CD4-positive, alpha-beta memory T cell (primary cell): ENCODE measurements at regions of chr21 and their contacts with region 1.

Region 1: GRCh38 chr21:42513985-42514882 is 582 bp downstream of the SLC37A1 start:
- DNase-seq: peak; percentile 50 to 64 (median 59)
- H3K4me3 ChIP-seq: peak overlapping the region; percentile 57 to 79
- H3K4me3 Mint-ChIP-seq: peak overlapping the region; percentile 90 to 92 (median 90)
- H3K27ac ChIP-seq: peak overlapping the region; percentile 65
- H3K27ac Mint-ChIP-seq: peak overlapping the region; percentile 78 to 94 (median 90)
- H3K4me1 ChIP-seq: peaks cover 29% of the 10 kb centered on the region
- H3K4me1 Mint-ChIP-seq: peaks cover 18 to 50% (median 31%) of the 10 kb centered on the region in 4 donors
- H3K27me3 ChIP-seq: no peaks in the 10 kb centered on the region
- H3K27me3 Mint-ChIP-seq: no peaks in the 10 kb centered on the region

Region 2: DNA sequence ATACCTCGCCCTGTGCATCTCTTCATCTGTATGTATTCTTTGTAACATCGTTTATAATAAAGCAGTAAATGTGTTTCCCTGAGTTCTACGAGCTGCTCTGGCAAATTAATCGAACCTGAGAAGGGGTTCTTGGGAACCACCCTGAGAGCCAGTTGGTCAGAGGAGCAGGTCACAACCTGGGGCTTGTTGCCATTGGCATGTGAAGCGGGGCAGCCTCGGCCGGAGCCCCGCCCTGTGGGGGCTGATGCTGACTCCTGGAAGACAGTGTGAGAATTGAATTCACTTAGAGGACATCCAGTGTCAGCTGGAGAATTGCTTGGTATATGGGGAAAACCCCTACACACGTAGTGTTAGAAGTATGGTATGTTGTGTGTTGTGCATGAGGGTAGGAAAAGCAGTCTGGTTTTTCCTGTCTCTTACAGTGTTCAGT is 10.9 kb after region 1 on chr21:
- CTCF ChIA-PET with region 1: no interaction called
- POLR2A ChIA-PET with region 1: interaction called, 42 read pairs
- intact Hi-C with region 1: loop called (anchors 1 kb)
- DNase-seq: no peak
- H3K4me3 ChIP-seq: no peak overlapping the region
- H3K4me3 Mint-ChIP-seq: peak overlapping the region in 2 of 8 donors; percentile 38 to 43
- H3K27ac ChIP-seq: no peak overlapping the region
- H3K27ac Mint-ChIP-seq: peak overlapping the region in 6 of 7 donors; percentile 38 to 85 (median 68)
- H3K4me1 ChIP-seq: peaks cover 32% of the 10 kb centered on the region
- H3K4me1 Mint-ChIP-seq: peaks cover 18 to 48% (median 35%) of the 10 kb centered on the region in 4 donors
- H3K27me3 ChIP-seq: no peaks in the 10 kb centered on the region
- H3K27me3 Mint-ChIP-seq: no peaks in the 10 kb centered on the region